Cardiac septum (tissue), 1 donor: ENCODE measurements at regions of chr6 and their contacts with region 1.

Region 1: GRCh38 chr6:118283766-118284165 is 264.3 kb upstream of the PLN start:
- DNase-seq: no peak

Region 2: DNA sequence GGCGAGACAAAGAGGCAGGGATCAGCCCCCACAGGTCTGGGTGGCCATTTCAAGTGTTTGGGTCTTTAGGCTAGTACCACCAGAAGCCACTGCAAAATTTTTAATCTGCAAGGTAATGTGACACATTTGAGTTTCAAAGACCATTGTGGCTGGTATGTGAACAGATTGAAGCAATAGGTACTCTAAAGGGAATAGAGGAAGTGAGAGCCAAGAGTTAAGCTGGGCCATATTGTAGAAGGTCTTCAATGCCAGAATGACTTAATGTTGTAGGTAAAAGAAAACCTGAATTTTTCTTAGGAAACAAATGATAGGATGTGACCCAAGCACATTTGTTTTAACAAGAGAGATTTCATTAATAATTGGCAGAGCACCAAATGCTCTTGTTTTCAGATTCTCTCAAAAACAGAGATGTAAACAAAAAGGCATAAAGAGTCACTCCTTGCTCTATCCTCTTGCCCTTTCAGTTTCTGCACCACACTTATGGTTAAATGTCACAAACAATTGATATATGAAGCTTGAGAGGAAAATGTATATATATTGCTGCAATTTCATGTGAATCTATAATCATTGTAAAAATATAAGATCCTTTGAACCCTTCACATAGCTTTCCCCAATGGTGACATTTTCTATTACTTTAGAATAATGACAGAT is 42.8 kb before region 1 on chr6:
- intact Hi-C with region 1: no loop called
- DNase-seq: no peak

Region 3: GRCh38 chr6:118372413-118372812 is 88.6 kb after region 1 on chr6:
- intact Hi-C with region 1: loop called (anchors 1 kb)
- DNase-seq: peak; percentile 79

Region 4: DNA sequence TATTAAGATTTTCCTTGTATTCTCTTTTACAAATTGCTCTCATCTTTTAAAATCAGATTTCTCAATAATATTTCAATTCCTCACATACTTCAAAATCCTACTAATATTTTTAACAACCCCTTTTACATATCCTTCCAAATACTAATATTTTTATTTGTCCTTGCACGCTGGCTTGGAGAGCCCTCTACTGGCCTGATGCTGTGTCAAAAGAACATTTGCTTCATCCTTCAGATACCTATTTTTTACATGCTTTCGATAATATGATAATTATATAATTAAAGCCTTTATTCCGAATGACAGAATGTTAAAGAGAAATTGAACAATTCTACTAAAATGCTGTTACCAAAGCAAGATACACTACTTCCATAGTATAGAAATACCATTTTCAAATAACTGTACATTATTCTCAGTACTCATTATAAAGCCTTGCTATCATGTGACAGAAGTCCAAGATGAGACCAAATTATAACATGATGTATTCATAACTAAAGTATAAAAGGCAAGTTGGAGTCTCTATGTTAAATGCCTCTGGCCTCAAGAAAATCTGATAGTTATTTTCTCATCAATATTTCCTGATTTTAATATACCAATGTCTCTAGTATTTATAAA is 225.3 kb after region 1 on chr6:
- intact Hi-C with region 1: loop called (anchors 1 kb)
- DNase-seq: no peak

Region 5: GRCh38 chr6:118580585-118581419 is 297.0 kb after region 1 on chr6:
- intact Hi-C with region 1: loop called (anchors 1 kb)
- DNase-seq: no peak

Region 6: DNA sequence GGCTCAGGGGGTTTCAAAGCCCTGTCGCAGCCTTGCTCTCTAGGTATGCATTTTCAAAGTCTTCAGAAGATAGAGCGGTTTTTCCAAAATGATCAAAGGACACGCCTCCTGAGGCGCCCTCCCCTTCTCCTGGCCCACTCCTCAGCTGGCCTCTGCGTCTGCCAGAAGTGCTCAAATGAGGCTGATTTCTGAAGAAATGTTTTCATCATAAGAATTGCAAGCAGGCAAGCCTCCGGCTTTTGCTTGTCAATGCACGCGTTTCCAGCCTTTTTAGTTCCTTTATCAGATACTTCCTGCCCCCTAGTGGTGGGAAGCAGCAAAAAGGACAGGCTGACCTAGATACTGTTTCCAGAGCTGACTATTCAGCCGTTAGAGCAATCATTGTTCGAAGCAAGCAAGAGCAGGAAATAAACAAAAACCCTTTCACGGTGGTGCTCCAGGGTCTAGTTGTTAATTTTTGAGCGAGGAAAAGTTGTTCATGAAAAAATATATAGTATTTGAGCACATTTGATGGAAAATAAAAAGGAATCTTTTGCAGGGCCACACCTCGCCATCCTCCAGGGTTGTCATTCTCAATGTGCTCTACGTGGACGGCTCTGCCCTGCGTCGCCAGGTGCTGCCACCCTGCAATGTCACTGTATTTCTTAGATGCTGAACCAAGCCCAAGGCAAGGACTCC is 516.8 kb after region 1 on chr6:
- intact Hi-C with region 1: loop called (anchors 10 kb)
- DNase-seq: peak; percentile 84